Activated naive CD8-positive, alpha-beta T cell treated with anti-CD3 and anti-CD28 coated beads, Interleukin-2, amount 10 ng/mL, durations not matched to agents 7 days and 5 days (primary cell): ENCODE measurements at regions of chr6 and their contacts with region 1.

Region 1: GRCh38 chr6:26270903-26271667 is 93.9 kb upstream of the BTN3A2 start:
- DNase-seq: peak; percentile 80
- ATAC-seq: peak; percentile 38
- H3K4me3 Mint-ChIP-seq: no peak overlapping the region
- H3K27ac Mint-ChIP-seq: no peak overlapping the region
- H3K4me1 Mint-ChIP-seq: peaks cover 24% of the 10 kb centered on the region
- H3K27me3 Mint-ChIP-seq: no peaks in the 10 kb centered on the region

Region 2: DNA sequence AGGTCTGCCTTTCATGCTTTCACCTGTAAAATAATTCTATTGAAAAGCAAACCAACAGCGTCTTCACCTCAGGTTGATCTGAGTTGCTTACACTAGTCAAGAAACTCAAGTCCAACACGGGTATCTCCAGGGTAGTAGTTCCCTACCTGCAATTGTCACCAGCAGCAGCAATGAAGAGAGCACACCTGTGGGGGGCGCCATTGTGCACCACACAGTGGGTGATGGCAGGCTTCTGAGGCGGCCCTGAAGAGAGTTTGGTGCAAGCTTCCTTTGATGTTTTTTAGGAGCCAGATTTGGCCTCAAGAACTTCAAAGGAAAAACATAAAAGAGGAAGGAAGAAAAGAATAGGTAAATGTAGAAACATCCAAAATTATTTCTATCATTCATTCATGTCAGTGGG is 1670.2 kb before region 1 on chr6:
- POLR2A ChIA-PET with region 1: no interaction called
- DNase-seq: no peak
- ATAC-seq: no peak
- H3K4me3 Mint-ChIP-seq: no peak overlapping the region
- H3K27ac Mint-ChIP-seq: no peak overlapping the region
- H3K4me1 Mint-ChIP-seq: no peaks in the 10 kb centered on the region
- H3K27me3 Mint-ChIP-seq: peaks cover 7% of the 10 kb centered on the region

Region 3: DNA sequence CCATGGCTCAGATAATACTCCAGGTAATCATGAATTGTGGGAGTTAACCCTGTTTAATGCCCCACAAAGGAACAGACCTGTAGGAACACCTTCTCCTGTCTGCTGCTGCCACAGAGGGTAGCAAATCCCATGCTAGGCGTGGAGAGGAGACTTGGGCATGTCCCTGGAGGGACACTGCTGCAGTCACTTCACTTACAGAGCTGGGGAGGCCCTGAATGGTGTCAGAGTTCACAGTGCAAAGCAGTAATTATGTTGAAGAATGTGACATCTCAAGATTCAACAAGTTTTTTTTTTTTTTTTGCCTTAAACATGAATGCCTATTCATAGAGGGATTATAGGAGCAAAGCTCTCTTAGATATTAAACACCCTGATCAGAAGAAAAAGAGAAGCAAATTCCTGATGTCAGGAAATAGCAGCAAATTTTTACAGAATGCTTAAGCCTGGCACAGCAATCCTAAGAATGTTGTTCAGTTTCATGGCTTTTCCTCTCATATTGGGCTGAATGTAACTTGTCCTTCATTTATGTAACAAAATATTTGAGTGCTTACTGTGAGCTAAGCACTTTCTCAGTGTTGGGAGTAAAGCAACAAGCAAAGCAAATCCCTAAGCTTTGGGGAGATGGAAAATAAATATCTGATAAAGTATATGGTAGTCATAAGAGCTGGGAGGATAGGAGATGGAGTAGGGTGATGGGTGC is 946.9 kb before region 1 on chr6:
- POLR2A ChIA-PET with region 1: no interaction called
- DNase-seq: no peak
- ATAC-seq: no peak
- H3K4me3 Mint-ChIP-seq: no peak overlapping the region
- H3K27ac Mint-ChIP-seq: no peak overlapping the region
- H3K4me1 Mint-ChIP-seq: no peaks in the 10 kb centered on the region
- H3K27me3 Mint-ChIP-seq: no peaks in the 10 kb centered on the region

Region 4: GRCh38 chr6:26054857-26055669 is 216.0 kb before region 1 on chr6:
- POLR2A ChIA-PET with region 1: interaction called, 16 read pairs
- DNase-seq: peak; percentile 81
- ATAC-seq: peak; percentile 69
- H3K4me3 Mint-ChIP-seq: peak overlapping the region; percentile 96
- H3K27ac Mint-ChIP-seq: peak overlapping the region; percentile 100
- H3K4me1 Mint-ChIP-seq: peaks cover 32% of the 10 kb centered on the region
- H3K27me3 Mint-ChIP-seq: no peaks in the 10 kb centered on the region

Region 5: DNA sequence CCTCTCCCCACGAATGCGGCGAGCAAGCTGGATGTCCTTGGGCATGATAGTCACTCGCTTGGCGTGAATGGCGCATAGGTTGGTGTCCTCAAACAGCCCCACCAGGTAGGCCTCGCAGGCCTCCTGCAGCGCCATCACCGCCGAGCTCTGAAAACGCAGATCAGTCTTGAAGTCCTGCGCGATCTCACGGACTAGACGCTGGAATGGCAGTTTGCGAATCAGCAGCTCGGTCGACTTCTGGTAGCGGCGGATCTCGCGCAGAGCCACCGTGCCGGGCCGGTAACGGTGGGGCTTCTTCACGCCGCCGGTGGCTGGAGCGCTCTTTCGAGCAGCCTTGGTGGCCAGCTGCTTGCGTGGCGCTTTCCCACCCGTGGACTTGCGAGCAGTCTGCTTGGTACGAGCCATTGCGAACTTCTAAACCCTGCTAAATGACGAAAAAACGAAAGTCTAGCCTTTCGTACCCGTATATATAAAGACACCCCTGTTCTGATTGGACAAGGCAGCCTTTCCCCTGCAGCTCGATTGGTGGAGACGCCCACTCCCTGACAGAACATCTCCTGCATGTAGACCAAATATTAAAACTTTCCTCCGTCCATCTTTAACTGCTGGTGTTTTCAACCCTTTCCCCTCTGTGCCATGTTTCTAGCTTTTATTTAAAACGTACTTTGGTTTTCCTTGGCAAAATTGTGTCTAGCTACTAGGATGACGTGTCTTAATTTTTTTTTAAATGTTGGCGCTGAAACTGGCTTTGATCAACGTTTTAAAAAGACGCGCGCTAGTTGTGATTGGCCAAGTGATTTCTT is 74.0 kb before region 1 on chr6:
- POLR2A ChIA-PET with region 1: interaction called, 275 read pairs
- DNase-seq: peak; percentile 83
- ATAC-seq: peak; percentile 44
- H3K4me3 Mint-ChIP-seq: peak overlapping the region; percentile 87
- H3K27ac Mint-ChIP-seq: peak overlapping the region; percentile 96
- H3K4me1 Mint-ChIP-seq: peaks cover 48% of the 10 kb centered on the region
- H3K27me3 Mint-ChIP-seq: no peaks in the 10 kb centered on the region

Region 6: GRCh38 chr6:26234421-26235296 is 36.4 kb before region 1 on chr6:
- POLR2A ChIA-PET with region 1: interaction called, 262 read pairs
- DNase-seq: peak; percentile 76
- ATAC-seq: peak; percentile 59
- H3K4me3 Mint-ChIP-seq: peak overlapping the region; percentile 94
- H3K27ac Mint-ChIP-seq: peak overlapping the region; percentile 100
- H3K4me1 Mint-ChIP-seq: peaks cover 36% of the 10 kb centered on the region
- H3K27me3 Mint-ChIP-seq: no peaks in the 10 kb centered on the region

Region 7: GRCh38 chr6:26329763-26330511 is 58.9 kb after region 1 on chr6:
- POLR2A ChIA-PET with region 1: interaction called, 10 read pairs
- DNase-seq: peak; percentile 49
- ATAC-seq: peak; percentile 28
- H3K4me3 Mint-ChIP-seq: peak overlapping the region; percentile 86
- H3K27ac Mint-ChIP-seq: peak overlapping the region; percentile 84
- H3K4me1 Mint-ChIP-seq: peaks cover 49% of the 10 kb centered on the region
- H3K27me3 Mint-ChIP-seq: peaks cover 34% of the 10 kb centered on the region

Region 8: GRCh38 chr6:27809939-27810767 is 1539.1 kb after region 1 on chr6:
- POLR2A ChIA-PET with region 1: interaction called, 50 read pairs
- DNase-seq: peak; percentile 83
- ATAC-seq: peak; percentile 38
- H3K4me3 Mint-ChIP-seq: peak overlapping the region; percentile 89
- H3K27ac Mint-ChIP-seq: peak overlapping the region; percentile 97
- H3K4me1 Mint-ChIP-seq: peaks cover 52% of the 10 kb centered on the region
- H3K27me3 Mint-ChIP-seq: no peaks in the 10 kb centered on the region